CD4-positive, alpha-beta memory T cell (primary cell): ENCODE measurements at regions of chr22 and their contacts with region 1.

Region 1: GRCh38 chr22:19479357-19480172 is at the start of gene CDC45:
- DNase-seq: peak; percentile 95 to 97 (median 95)
- H3K4me3 ChIP-seq: peak within 1 kb of the TSS; percentile 62 to 83
- H3K4me3 Mint-ChIP-seq: peak within 1 kb of the TSS; percentile 91 to 98 (median 94)
- H3K27ac ChIP-seq: peak within 1 kb of the TSS; percentile 96
- H3K27ac Mint-ChIP-seq: peak within 1 kb of the TSS; percentile 97 to 100 (median 100)
- H3K4me1 ChIP-seq: peaks cover 18% of the 10 kb centered on the region
- H3K4me1 Mint-ChIP-seq: peaks cover 21 to 46% (median 34%) of the 10 kb centered on the region in 4 donors
- H3K27me3 ChIP-seq: no peaks in the 10 kb centered on the region
- H3K27me3 Mint-ChIP-seq: no peaks in the 10 kb centered on the region
- total RNA-seq, gene CDC45: 0.53 to 0.64 TPM

Region 2: DNA sequence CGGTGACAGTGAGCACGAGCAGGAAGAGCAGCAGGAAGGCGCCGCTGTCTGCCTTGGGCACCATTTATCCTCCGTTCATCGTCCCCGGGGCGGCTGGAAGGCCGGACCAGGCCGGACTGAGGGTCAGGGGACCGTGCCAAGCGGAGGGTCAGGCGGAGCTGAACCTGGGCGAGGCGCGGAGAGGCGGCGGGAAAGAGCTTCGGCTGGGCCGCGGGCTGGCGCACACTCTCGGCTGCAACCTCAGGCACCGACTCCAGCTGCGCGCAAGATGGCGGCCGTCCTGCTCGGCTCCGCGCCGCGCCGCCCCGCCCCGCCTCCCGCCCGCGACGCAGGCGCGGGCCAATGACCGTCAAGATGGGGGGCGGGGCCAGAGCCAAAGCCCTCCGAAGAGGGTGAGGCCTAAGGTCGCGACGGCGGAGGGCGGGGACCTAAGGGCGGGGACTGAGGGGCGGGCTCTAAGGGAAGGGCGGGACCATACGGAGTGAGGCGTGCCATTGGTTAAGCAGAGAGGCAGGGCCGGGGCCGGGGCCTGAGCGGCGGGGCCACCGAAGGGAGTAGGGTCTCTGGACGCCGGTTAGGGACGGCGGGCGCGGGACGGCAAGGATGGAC is 357.3 kb before region 1 on chr22 and contains the start of gene DGCR2:
- CTCF ChIA-PET with region 1: no interaction called
- POLR2A ChIA-PET with region 1: interaction called, 4 read pairs
- intact Hi-C with region 1: loop called (anchors 1 kb)
- DNase-seq: peak; percentile 93 to 95 (median 95)
- H3K4me3 ChIP-seq: peak within 1 kb of the TSS; percentile 52 to 85
- H3K4me3 Mint-ChIP-seq: peak within 1 kb of the TSS; percentile 87 to 96 (median 92)
- H3K27ac ChIP-seq: peak within 1 kb of the TSS; percentile 69
- H3K27ac Mint-ChIP-seq: peak within 1 kb of the TSS; percentile 86 to 96 (median 93)
- H3K4me1 ChIP-seq: peaks cover 49% of the 10 kb centered on the region
- H3K4me1 Mint-ChIP-seq: peaks cover 33 to 56% (median 43%) of the 10 kb centered on the region in 4 donors
- H3K27me3 ChIP-seq: no peaks in the 10 kb centered on the region
- H3K27me3 Mint-ChIP-seq: peaks cover 0 to 2% of the 10 kb centered on the region in 2 donors
- total RNA-seq, gene DGCR2: 61.3 to 66.7 TPM

Region 3: GRCh38 chr22:19178656-19179496 is 300.7 kb before region 1 on chr22 and contains the start of gene SLC25A1:
- CTCF ChIA-PET with region 1: interaction called, 3 read pairs
- POLR2A ChIA-PET with region 1: interaction called, 11 read pairs
- intact Hi-C with region 1: loop called (anchors 1 kb)
- DNase-seq: peak; percentile 50 to 70 (median 61)
- H3K4me3 ChIP-seq: peak within 1 kb of the TSS in 1 of 2 donors; percentile 66
- H3K4me3 Mint-ChIP-seq: peak within 1 kb of the TSS; percentile 82 to 92 (median 90)
- H3K27ac ChIP-seq: peak within 1 kb of the TSS; percentile 62
- H3K27ac Mint-ChIP-seq: peak within 1 kb of the TSS; percentile 83 to 93 (median 86)
- H3K4me1 ChIP-seq: peaks cover 23% of the 10 kb centered on the region
- H3K4me1 Mint-ChIP-seq: peaks cover 4 to 32% (median 15%) of the 10 kb centered on the region in 4 donors
- H3K27me3 ChIP-seq: no peaks in the 10 kb centered on the region
- H3K27me3 Mint-ChIP-seq: no peaks in the 10 kb centered on the region
- total RNA-seq, gene SLC25A1: 39.0 to 40.7 TPM

Region 4: DNA sequence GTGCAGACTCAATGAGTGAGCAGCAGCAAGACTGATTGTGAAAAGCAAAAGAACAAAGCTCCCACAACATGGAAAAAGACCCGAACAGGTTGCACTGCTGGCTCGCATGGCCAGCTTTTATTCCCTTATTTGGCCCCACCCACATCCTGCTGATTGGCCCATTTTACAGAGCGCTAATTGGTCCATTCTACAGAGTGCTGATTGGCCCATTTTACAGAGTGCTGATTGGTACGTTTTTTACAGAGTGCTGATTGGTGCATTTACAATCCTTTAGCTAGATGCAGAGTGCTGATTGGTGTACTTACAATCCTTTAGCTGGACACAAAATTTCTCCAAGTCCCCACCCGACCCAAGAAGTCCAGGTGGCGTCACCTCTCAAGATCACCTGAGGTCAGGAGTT is 285.7 kb before region 1 on chr22:
- CTCF ChIA-PET with region 1: no interaction called
- POLR2A ChIA-PET with region 1: no interaction called
- intact Hi-C with region 1: no loop called
- DNase-seq: no peak
- H3K4me3 ChIP-seq: no peak overlapping the region
- H3K4me3 Mint-ChIP-seq: no peak overlapping the region
- H3K27ac ChIP-seq: no peak overlapping the region
- H3K27ac Mint-ChIP-seq: no peak overlapping the region
- H3K4me1 ChIP-seq: peaks cover 9% of the 10 kb centered on the region
- H3K4me1 Mint-ChIP-seq: peaks cover 9 to 16% (median 13%) of the 10 kb centered on the region in 4 donors
- H3K27me3 ChIP-seq: no peaks in the 10 kb centered on the region
- H3K27me3 Mint-ChIP-seq: no peaks in the 10 kb centered on the region

Region 5: GRCh38 chr22:19361501-19362103 is 118.0 kb before region 1 on chr22:
- CTCF ChIA-PET with region 1: no interaction called
- POLR2A ChIA-PET with region 1: no interaction called
- intact Hi-C with region 1: no loop called
- DNase-seq: no peak
- H3K4me3 ChIP-seq: no peak overlapping the region
- H3K4me3 Mint-ChIP-seq: no peak overlapping the region
- H3K27ac ChIP-seq: no peak overlapping the region
- H3K27ac Mint-ChIP-seq: no peak overlapping the region
- H3K4me1 ChIP-seq: no peaks in the 10 kb centered on the region
- H3K4me1 Mint-ChIP-seq: peaks cover 0 to 2% (median 0%) of the 10 kb centered on the region in 4 donors
- H3K27me3 ChIP-seq: no peaks in the 10 kb centered on the region
- H3K27me3 Mint-ChIP-seq: no peaks in the 10 kb centered on the region

Region 6: DNA sequence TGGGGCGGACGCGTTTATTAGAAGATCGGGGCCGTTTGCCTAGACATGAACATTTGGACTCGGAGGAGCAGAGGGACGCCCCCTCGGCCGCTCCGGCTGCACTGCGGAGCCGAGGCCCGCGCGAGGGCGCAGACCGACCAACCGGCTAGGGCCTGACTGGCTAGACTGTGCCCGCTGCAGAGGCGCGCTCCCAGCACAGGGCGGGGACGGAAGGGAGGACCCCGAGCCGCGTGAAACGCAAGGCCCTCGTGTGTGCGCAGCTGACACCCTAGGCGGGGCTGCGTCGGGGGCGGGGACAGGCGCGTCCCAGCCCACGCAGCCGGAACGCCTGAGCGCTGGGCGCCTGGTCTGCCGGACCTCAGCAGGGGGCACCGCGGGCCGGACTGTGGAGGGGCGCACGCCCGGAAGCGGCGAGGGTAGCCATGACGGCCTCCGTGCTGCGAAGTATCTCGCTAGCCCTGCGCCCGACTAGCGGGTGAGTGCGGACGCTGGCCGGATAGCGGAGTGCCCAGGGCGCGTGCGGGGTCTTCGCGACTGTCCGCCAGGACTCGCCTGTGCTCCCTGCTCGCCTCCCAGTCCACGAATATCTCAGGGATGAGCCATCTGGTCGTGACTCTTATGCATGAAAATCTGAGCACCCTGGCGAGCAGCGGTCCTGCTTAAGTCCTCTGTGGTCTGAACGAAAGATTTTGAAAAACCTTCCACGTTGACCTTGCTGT is 47.3 kb before region 1 on chr22 and contains the start of gene MRPL40:
- CTCF ChIA-PET with region 1: interaction called, 3 read pairs
- POLR2A ChIA-PET with region 1: interaction called, 47 read pairs
- intact Hi-C with region 1: loop called (anchors 1 kb)
- DNase-seq: peak; percentile 80 to 88 (median 82)
- H3K4me3 ChIP-seq: peak within 1 kb of the TSS; percentile 88 to 97
- H3K4me3 Mint-ChIP-seq: peak within 1 kb of the TSS; percentile 87 to 97 (median 90)
- H3K27ac ChIP-seq: peak within 1 kb of the TSS; percentile 81
- H3K27ac Mint-ChIP-seq: peak within 1 kb of the TSS; percentile 90 to 96 (median 92)
- H3K4me1 ChIP-seq: peaks cover 43% of the 10 kb centered on the region
- H3K4me1 Mint-ChIP-seq: peaks cover 23 to 48% (median 34%) of the 10 kb centered on the region in 4 donors
- H3K27me3 ChIP-seq: no peaks in the 10 kb centered on the region
- H3K27me3 Mint-ChIP-seq: no peaks in the 10 kb centered on the region
- total RNA-seq, gene MRPL40: 16.2 to 16.8 TPM

Region 7: GRCh38 chr22:19598054-19598855 is 118.7 kb after region 1 on chr22:
- CTCF ChIA-PET with region 1: interaction called, 3 read pairs
- POLR2A ChIA-PET with region 1: interaction called, 4 read pairs
- intact Hi-C with region 1: loop called (anchors 2 kb)
- DNase-seq: peak in 3 of 5 donors; percentile 20 to 48 (median 23)
- H3K4me3 ChIP-seq: peak overlapping the region in 1 of 2 donors; percentile 22
- H3K4me3 Mint-ChIP-seq: peak overlapping the region in 7 of 8 donors; percentile 59 to 84 (median 77)
- H3K27ac ChIP-seq: peak overlapping the region; percentile 51
- H3K27ac Mint-ChIP-seq: peak overlapping the region; percentile 82 to 97 (median 94)
- H3K4me1 ChIP-seq: peaks cover 43% of the 10 kb centered on the region
- H3K4me1 Mint-ChIP-seq: peaks cover 31 to 58% (median 41%) of the 10 kb centered on the region in 4 donors
- H3K27me3 ChIP-seq: no peaks in the 10 kb centered on the region
- H3K27me3 Mint-ChIP-seq: no peaks in the 10 kb centered on the region

Region 8: DNA sequence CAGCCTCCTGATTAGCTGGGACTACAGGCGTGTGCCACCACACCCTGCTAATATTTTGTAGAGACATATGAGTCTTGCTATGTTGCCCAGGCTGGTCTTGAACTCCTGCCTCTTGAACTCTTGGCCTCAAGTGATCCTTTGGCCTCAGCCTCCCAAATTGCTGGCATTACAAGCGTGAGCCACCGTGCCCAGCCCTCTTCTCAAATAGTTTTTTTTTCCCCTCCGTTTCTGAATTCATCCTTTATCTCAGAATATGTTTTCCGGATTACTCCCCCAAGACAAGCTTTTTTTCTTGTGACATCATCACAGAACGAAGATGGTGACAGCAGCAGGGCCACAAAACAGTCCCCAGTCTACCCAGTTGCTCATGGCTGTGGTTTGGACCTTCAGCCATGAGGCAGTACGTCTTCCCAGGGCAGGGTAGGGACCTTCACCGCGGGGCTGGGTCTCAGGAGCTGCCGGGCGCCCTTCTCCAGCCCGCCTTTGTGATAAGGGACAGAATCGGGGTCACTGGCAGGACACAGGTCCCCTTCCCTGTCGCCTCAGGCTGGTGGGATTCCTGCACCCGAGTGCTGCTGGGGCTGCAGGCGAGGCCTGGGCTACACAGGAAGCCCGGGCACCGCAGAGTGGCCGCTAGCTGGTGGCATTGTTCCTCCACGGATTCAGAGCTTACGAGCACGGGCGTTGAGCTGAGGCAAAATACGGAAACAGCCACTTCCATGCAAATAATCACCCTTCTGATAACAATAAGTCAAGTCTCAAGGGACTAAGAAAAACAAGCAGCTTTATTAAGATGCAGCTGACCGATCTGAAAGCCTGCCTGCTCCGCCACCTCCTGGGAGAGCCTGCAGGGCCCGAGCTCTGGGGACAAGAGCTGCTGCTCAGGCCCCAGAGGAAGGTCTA is 293.1 kb after region 1 on chr22:
- CTCF ChIA-PET with region 1: no interaction called
- POLR2A ChIA-PET with region 1: no interaction called
- intact Hi-C with region 1: no loop called
- DNase-seq: no peak
- H3K4me3 ChIP-seq: no peak overlapping the region
- H3K4me3 Mint-ChIP-seq: no peak overlapping the region
- H3K27ac ChIP-seq: no peak overlapping the region
- H3K27ac Mint-ChIP-seq: no peak overlapping the region
- H3K4me1 ChIP-seq: peaks cover 26% of the 10 kb centered on the region
- H3K4me1 Mint-ChIP-seq: peaks cover 2 to 8% (median 6%) of the 10 kb centered on the region in 4 donors
- H3K27me3 ChIP-seq: peaks cover 10% of the 10 kb centered on the region
- H3K27me3 Mint-ChIP-seq: peaks cover 47 to 52% of the 10 kb centered on the region in 2 donors